Common myeloid progenitor, CD34-positive (primary cell): ENCODE measurements at regions of chr12 and their contacts with region 1.

Region 1: DNA sequence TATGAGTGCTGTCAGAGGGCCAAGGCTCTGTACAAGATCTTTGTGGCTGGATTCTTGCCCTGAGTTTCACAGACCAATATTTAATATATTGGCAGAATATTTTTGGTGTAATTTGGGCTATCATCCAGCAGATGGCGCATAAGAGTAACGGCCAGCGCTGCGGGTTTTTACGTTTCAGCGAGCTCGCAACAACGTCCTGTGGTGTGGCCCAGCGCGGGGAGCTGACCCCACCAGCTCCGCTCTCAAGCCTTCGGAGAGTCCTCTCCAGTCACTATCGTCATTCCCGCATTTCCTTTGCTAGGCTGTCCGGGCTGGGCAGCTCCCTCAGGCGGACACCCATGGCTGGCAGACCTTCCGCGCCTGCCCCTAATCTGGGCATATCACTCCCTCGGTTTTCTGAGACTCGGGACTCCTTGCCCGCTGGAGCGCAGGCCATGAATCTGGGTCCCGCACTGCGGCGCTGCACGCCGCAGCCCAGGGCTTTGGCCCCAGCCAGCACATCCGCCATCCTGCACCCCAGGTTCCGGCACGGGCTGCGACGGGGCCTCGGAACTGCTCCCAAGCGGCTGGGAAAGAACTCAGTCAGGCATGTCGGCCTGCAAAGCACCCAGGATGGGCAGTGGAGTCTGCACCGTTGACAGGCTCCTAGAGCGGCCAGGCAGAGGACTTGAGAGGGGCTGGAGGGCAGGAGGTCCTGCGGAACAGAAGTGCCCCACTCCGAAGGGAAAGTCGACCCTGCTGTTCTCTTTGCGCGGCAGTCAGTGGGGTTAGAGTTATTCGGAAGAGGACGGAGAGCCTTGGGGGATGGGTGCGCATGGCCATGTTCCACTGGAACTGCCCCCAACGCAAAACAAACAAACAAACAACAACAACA is 18.4 kb downstream of the OLR1 start:
- DNase-seq: peak; percentile 52 to 76 (median 74)
- H3K4me3 ChIP-seq: peak overlapping the region; percentile 53 to 92 (median 81)
- H3K27ac ChIP-seq: no peak overlapping the region
- H3K4me1 ChIP-seq: peaks cover 0 to 10% (median 8%) of the 10 kb centered on the region in 4 experiments
- H3K27me3 ChIP-seq: peaks cover 0 to 2% (median 0%) of the 10 kb centered on the region in 5 experiments

Region 2: GRCh38 chr12:10113080-10113479 is 40.4 kb before region 1 on chr12:
- CTCF ChIA-PET with region 1: no interaction called
- POLR2A ChIA-PET with region 1: no interaction called
- DNase-seq: no peak
- H3K4me3 ChIP-seq: no peak overlapping the region
- H3K27ac ChIP-seq: no peak overlapping the region
- H3K4me1 ChIP-seq: peaks cover 0 to 3% (median 1%) of the 10 kb centered on the region in 4 experiments
- H3K27me3 ChIP-seq: no peaks in the 10 kb centered on the region

Region 3: DNA sequence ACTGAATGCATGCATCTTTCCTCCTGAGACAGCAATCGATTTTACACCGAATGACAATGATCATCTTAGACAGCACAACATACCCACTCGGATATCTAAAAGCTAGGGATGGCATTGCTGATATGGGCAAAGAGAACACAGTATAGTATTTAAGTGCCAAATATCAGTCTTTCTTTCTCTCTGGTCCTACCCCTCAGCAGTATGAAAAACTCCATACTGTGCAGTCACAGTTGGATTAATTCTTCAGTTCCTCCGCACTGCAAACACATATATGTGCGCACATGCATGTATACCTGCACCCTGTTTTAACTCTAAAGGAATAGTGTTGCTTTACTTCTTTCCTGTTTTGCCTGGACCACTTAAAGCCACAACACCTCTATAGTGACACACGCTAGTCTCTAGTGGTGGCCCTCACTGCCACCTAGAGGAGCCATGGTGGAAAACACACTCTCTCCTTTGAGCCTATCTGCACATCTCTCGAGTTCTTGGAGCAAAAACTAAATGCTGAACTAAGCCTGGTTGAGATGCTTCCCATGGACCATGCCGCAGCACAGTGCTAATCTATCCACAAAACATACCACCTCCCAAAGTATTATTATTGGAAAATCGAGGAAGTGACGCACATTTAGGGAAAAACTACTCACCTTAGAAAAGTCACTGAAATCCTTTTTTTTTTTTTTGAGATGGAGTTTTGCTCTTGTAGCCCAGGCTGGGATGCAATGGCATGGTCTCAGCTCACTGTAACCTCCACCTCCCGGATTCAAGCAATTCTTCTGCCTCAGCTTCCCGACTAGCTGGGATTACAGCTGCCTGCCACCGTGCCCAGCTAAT is 37.3 kb after region 1 on chr12:
- CTCF ChIA-PET with region 1: interaction called, 32 read pairs
- POLR2A ChIA-PET with region 1: no interaction called
- DNase-seq: peak; percentile 66 to 83 (median 77)
- H3K4me3 ChIP-seq: no peak overlapping the region
- H3K27ac ChIP-seq: no peak overlapping the region
- H3K4me1 ChIP-seq: peaks cover 3 to 6% (median 4%) of the 10 kb centered on the region in 4 experiments
- H3K27me3 ChIP-seq: peaks cover 0 to 3% (median 0%) of the 10 kb centered on the region in 5 experiments

Region 4: DNA sequence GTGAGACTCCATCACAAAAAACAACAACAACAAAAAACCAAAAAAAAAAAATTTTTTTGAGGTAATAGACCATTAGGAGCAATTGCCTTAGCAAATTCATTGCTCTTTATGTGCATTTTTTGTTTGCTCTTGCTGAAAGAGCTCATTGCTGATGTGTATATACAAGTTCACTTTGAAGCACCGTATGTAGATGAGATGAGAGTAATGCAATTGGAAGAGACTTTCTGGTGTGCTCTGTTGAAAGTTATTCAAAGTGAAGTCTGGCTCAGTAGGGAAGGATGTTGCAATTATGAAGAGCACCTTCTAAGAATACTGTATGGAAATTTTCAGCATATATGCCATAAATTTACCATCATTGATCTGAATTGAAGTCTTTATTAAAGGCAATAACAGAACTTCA is 107.4 kb after region 1 on chr12:
- CTCF ChIA-PET with region 1: no interaction called
- POLR2A ChIA-PET with region 1: no interaction called
- DNase-seq: no peak
- H3K4me3 ChIP-seq: no peak overlapping the region
- H3K27ac ChIP-seq: no peak overlapping the region
- H3K4me1 ChIP-seq: no peaks in the 10 kb centered on the region
- H3K27me3 ChIP-seq: no peaks in the 10 kb centered on the region